ENCODE measurements at regions of chr3 and their contacts with region 1.

Region 1: DNA sequence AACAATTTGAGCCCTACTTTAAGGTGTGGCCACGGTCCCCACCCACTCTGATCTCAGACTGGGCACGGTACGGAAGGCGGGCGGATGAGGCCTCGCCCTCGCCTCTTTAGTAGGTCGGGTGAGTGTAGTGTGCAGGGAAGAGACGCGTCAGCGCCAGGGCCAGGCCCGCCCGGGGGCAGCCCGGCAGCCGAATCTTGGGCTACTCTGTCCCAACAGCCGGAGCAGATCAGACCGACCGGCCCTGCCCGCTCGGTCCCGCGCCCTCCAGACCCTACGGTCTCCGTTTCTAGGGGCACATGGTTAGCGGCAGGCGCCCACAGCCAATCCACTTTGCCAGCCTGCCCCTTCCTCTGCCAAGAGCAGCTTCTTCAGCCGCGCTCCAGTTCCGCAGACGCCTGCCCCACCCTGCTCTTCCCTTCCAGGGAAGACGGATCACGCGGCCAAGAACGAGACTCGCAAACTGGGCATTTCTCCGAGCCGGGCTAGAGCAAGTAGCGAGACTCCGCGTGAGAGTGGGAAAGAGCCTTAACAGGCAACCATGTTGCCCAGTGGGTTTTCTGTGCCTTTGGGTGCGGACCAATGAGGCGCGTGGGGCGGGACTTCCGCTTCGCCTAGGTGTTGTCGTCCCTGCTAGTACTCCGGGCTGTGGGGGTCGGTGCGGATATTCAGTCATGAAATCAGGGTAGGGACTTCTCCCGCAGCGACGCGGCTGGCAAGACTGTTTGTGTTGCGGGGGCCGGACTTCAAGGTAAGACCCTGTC is at the start of gene RNF13:
- DNase-seq: peak; percentile 88
- H3K4me3 Mint-ChIP-seq: peak within 1 kb of the TSS; percentile 94
- H3K27ac Mint-ChIP-seq: peak within 1 kb of the TSS; percentile 99
- H3K4me1 Mint-ChIP-seq: peaks cover 50% of the 10 kb centered on the region
- H3K27me3 Mint-ChIP-seq: peaks cover 13% of the 10 kb centered on the region
- total RNA-seq, gene RNF13: 33.5 and 39.6 TPM in 2 replicates

Region 2: GRCh38 chr3:149086232-149086988 is 726.4 kb before region 1 on chr3 and contains the start of gene HLTF:
- intact Hi-C with region 1: loop called (anchors 5 kb)
- DNase-seq: peak; percentile 88
- H3K4me3 Mint-ChIP-seq: peak within 1 kb of the TSS; percentile 93
- H3K27ac Mint-ChIP-seq: peak within 1 kb of the TSS; percentile 79
- H3K4me1 Mint-ChIP-seq: peaks cover 27% of the 10 kb centered on the region
- H3K27me3 Mint-ChIP-seq: no peaks in the 10 kb centered on the region
- total RNA-seq, gene HLTF: 20.8 and 23.9 TPM in 2 replicates

Region 3: GRCh38 chr3:149512209-149512782 is 300.5 kb before region 1 on chr3:
- intact Hi-C with region 1: loop called (anchors 1 kb)
- DNase-seq: no peak
- H3K4me3 Mint-ChIP-seq: no peak overlapping the region
- H3K27ac Mint-ChIP-seq: no peak overlapping the region
- H3K4me1 Mint-ChIP-seq: peaks cover 12% of the 10 kb centered on the region
- H3K27me3 Mint-ChIP-seq: peaks cover 24% of the 10 kb centered on the region

Region 4: GRCh38 chr3:149717391-149718056 is 95.3 kb before region 1 on chr3:
- intact Hi-C with region 1: no loop called
- DNase-seq: no peak
- H3K4me3 Mint-ChIP-seq: no peak overlapping the region
- H3K27ac Mint-ChIP-seq: no peak overlapping the region
- H3K4me1 Mint-ChIP-seq: peaks cover 10% of the 10 kb centered on the region
- H3K27me3 Mint-ChIP-seq: no peaks in the 10 kb centered on the region

Region 5: GRCh38 chr3:149752051-149752787 is 60.6 kb before region 1 on chr3 and contains the start of gene COMMD2:
- intact Hi-C with region 1: loop called (anchors 2 kb)
- DNase-seq: peak; percentile 68
- H3K4me3 Mint-ChIP-seq: peak within 1 kb of the TSS; percentile 97
- H3K27ac Mint-ChIP-seq: peak within 1 kb of the TSS; percentile 87
- H3K4me1 Mint-ChIP-seq: peaks cover 16% of the 10 kb centered on the region
- H3K27me3 Mint-ChIP-seq: peaks cover 8% of the 10 kb centered on the region
- total RNA-seq, gene COMMD2: 40.3 and 43.3 TPM in 2 replicates

Region 6: DNA sequence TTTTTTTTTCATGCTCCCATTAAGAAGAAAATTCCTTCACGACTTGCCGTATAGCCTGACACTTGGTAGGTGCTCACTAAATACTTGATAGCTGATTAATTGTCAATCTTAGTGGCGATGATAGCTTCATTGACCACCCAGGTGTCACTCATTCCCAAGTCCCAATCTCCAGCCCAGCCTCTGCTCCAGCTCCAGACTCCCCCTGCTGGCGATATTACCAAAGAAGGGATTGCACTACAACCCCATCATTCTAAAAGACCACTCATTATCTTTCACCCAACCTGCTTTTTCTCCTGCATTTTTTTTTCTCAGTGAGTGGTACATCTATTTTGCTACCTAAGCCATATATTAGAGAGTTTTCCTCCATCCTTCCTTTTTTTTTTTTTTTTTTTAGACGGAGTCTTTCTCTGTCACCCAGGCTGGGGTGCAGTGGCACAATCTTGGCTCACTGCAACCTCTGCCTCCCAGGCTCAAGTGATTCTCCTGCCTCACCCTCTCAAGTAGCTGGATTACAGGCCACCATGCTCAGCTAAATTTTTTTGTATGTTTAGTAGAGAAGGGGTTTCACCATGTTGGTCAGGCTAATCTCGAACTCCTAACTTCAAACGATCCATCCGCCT is 41.0 kb before region 1 on chr3:
- intact Hi-C with region 1: loop called (anchors 5 kb)
- DNase-seq: no peak
- H3K4me3 Mint-ChIP-seq: no peak overlapping the region
- H3K27ac Mint-ChIP-seq: no peak overlapping the region
- H3K4me1 Mint-ChIP-seq: no peaks in the 10 kb centered on the region
- H3K27me3 Mint-ChIP-seq: peaks cover 17% of the 10 kb centered on the region

Region 7: DNA sequence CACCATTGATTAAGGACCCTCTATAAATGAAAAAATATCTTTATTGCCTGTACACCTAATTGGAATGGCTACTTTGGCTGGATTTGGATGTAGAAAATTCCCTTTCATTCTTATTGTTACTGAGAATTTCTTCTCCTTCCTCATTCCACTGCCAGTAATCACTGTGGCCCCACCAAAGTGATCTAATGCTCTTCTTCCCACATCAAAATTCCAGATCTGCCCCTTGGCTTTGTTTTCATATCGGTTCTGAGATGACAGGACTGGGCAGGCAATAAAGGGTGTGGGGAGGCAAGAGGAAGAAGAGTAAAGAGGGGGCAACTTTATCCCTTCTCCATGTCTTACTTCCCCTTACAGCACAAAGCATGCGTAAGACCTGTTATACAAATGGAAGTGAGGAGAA is 22.5 kb before region 1 on chr3:
- intact Hi-C with region 1: no loop called
- DNase-seq: no peak
- H3K4me3 Mint-ChIP-seq: no peak overlapping the region
- H3K27ac Mint-ChIP-seq: no peak overlapping the region
- H3K4me1 Mint-ChIP-seq: no peaks in the 10 kb centered on the region
- H3K27me3 Mint-ChIP-seq: peaks cover 24% of the 10 kb centered on the region

Measured in activated T-helper 2 cell treated with anti-CD3 and anti-CD28 coated beads, Interferon-gamma antibody, Interleukin-2, Interleukin-4, amounts not matched to agents 10 μg/mL and 5 μg/mL and 100 μg/mL, durations not matched to agents 14 hours and 24 hours and 36 hours (primary cell).